Dorsolateral prefrontal cortex (tissue), 120 donors: ENCODE measurements at regions of chr3 and their contacts with region 1.

Region 1: DNA sequence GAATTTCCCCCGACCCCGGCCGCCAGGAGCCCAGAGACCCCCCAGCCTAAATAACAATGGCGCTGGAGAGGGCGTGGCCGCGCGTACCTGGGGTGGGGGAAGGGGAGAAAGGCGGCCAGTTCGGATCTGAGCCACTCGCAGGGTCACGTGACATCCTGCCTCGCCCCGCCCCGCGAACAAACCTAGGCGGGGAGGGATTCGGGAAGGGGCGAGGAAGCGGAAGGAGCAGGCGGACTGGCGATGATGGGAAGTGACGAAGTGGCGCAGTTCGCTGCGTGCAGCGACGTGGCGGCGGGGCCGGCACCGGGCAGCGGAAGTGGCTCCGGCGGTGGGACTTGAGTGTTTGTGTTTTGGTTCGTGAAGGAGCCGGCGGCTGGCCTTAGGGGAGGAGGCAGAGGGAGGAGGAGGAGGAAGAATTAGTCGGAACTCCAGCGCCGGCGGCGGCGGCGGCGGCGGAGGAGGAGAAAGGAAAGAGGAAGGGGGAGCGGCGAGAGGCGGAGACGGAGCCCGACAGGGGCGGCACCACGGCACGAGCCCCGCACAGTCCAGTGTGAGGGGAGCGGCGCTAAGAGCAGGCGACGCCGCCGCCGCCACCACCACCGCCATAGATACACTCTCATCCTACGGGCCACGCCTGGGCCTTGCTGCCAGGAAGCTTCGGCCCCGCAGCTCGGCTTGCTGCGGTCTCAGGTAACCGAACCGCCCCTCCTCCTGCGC is at the start of gene RAB5A:
- DNase-seq: peak; percentile 91 to 97 (median 95)
- H3K4me3 ChIP-seq: peak within 1 kb of the TSS; percentile 61 to 100 (median 95)
- H3K27ac ChIP-seq: peak within 1 kb of the TSS; percentile 66 to 99 (median 93)
- H3K27me3 ChIP-seq: no peaks in the 10 kb centered on the region
- CTCF ChIP-seq: peak in 27 of 56 donors; percentile 3 to 49 (median 20)
- total RNA-seq, gene RAB5A: 49.8 to 119 (median 94.4) TPM

Region 2: GRCh38 chr3:19885468-19885867 is 61.5 kb before region 1 on chr3:
- intact Hi-C with region 1: loop called in 1 of 2 experiments (anchors 10 kb)
- DNase-seq: no peak
- H3K4me3 ChIP-seq: no peak overlapping the region
- H3K27ac ChIP-seq: no peak overlapping the region
- H3K27me3 ChIP-seq: no peaks in the 10 kb centered on the region
- CTCF ChIP-seq: peak; percentile 25 to 79 (median 60)

Region 3: GRCh38 chr3:20141851-20142250 is 194.9 kb after region 1 on chr3:
- intact Hi-C with region 1: loop called in 1 of 2 experiments (anchors 10 kb)
- DNase-seq: peak; percentile 27 to 80 (median 68)
- H3K4me3 ChIP-seq: peak overlapping the region in 14 of 59 donors; percentile 1 to 43 (median 19)
- H3K27ac ChIP-seq: peak overlapping the region in 55 of 59 donors; percentile 4 to 86 (median 63)
- H3K27me3 ChIP-seq: no peaks in the 10 kb centered on the region
- CTCF ChIP-seq: peak in 1 of 56 donors; percentile 11